ENCODE measurements at regions of chr10 and their contacts with region 1.

Region 1: GRCh38 chr10:46284293-46285229 is 2.2 kb upstream of the ANTXRL start:
- DNase-seq: peak; percentile 86
- ATAC-seq: peak; percentile 83
- H3K4me3 Mint-ChIP-seq: peak overlapping the region; percentile 82
- H3K27ac Mint-ChIP-seq: peak overlapping the region; percentile 90
- H3K4me1 Mint-ChIP-seq: peaks cover 16% of the 10 kb centered on the region
- H3K27me3 Mint-ChIP-seq: peaks cover 11% of the 10 kb centered on the region

Region 2: GRCh38 chr10:46022978-46023702 is 261.4 kb before region 1 on chr10:
- CTCF ChIA-PET with region 1: no interaction called
- POLR2A ChIA-PET with region 1: no interaction called
- intact Hi-C with region 1: loop called in 1 of 2 experiments (anchors 5 kb)
- DNase-seq: peak; percentile 91
- ATAC-seq: peak; percentile 91
- H3K4me3 Mint-ChIP-seq: peak overlapping the region; percentile 79
- H3K27ac Mint-ChIP-seq: peak overlapping the region; percentile 75
- H3K4me1 Mint-ChIP-seq: peaks cover 93% of the 10 kb centered on the region
- H3K27me3 Mint-ChIP-seq: no peaks in the 10 kb centered on the region

Region 3: DNA sequence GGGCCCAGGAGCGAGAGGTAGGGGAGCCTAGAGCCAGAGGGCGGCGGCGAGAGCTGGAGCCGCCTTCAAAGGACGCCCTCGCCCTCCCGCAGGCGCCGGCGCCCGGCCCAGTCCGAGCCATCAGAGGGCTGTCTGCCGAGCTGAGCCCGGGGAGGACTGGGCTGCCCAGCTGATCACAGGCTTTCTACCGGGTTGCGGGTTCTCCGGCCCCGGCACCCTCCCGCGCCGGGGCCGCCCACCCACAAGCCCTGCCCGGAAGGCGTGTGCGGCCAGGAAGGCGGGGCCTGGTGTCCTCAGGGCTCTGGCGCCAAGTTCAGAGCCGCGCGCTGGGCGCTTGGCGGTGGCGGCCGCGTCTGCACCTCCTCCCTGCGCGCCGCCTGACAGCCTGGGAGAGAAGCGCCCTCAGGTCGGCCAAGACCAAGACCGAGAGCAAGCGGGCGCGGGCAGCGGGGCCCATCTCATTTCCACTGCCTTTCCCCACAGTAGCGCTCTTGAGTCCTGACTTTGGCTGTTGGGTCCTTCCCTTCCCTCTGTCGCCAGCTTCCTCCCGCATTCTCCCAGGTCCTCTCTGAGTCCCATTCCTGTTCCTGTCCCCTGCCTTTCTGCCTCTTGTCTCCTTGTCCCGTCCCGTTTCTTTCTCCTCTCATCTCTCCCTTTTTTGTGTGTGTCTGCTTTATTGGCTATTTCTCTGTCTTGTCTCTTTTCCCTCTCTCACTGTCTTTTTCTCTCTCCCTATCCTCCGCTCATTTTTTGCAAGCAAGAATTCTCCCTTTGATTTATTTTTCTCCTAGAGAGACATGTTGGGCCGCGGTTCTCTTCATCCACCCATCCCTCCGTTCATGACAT is 177.9 kb before region 1 on chr10:
- CTCF ChIA-PET with region 1: interaction called, 7 read pairs
- POLR2A ChIA-PET with region 1: interaction called, 3 read pairs
- intact Hi-C with region 1: loop called in 1 of 2 experiments (anchors 1 kb)
- DNase-seq: peak; percentile 79
- ATAC-seq: peak; percentile 97
- H3K4me3 Mint-ChIP-seq: peak overlapping the region; percentile 73
- H3K27ac Mint-ChIP-seq: peak overlapping the region; percentile 75
- H3K4me1 Mint-ChIP-seq: peaks cover 14% of the 10 kb centered on the region
- H3K27me3 Mint-ChIP-seq: peaks cover 6% of the 10 kb centered on the region

Region 4: DNA sequence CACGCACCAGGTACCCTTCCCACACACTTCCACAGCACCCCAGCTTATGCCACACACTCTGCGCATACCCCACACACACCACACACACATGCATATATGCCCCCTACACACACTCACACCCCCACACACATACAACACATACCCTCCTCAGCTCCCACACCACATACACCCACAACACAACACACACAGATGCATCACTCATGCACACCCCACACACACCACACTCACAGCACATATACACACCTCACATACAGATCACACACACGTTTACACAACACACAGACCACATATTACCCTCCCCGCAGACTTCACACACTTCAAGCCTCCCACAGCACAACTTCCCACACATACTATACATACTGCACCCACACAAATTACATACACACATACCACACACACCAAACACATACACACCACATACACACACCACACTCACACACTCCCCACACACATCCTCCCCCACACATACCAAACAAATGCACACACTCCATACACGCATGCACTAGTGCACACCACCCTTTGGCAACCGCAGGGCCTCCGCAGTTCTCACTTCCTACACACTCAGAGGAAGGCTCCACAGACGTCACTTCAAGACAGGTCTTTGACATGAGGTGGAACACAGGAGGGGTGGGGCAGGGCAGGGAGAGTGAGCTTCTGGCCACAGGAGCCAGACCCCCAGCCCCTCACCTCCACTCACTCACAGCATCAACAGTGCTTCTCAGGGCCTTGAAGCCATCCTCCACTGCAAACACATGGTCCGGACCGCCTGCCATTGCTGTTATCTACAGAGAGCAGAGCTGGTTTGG is 16.3 kb before region 1 on chr10:
- CTCF ChIA-PET with region 1: interaction called, 3 read pairs
- POLR2A ChIA-PET with region 1: interaction called, 3 read pairs
- intact Hi-C with region 1: loop called in 1 of 2 experiments (anchors 1 kb)
- DNase-seq: peak; percentile 87
- ATAC-seq: peak; percentile 80
- H3K4me3 Mint-ChIP-seq: no peak overlapping the region
- H3K27ac Mint-ChIP-seq: no peak overlapping the region
- H3K4me1 Mint-ChIP-seq: peaks cover 25% of the 10 kb centered on the region
- H3K27me3 Mint-ChIP-seq: no peaks in the 10 kb centered on the region

Region 5: DNA sequence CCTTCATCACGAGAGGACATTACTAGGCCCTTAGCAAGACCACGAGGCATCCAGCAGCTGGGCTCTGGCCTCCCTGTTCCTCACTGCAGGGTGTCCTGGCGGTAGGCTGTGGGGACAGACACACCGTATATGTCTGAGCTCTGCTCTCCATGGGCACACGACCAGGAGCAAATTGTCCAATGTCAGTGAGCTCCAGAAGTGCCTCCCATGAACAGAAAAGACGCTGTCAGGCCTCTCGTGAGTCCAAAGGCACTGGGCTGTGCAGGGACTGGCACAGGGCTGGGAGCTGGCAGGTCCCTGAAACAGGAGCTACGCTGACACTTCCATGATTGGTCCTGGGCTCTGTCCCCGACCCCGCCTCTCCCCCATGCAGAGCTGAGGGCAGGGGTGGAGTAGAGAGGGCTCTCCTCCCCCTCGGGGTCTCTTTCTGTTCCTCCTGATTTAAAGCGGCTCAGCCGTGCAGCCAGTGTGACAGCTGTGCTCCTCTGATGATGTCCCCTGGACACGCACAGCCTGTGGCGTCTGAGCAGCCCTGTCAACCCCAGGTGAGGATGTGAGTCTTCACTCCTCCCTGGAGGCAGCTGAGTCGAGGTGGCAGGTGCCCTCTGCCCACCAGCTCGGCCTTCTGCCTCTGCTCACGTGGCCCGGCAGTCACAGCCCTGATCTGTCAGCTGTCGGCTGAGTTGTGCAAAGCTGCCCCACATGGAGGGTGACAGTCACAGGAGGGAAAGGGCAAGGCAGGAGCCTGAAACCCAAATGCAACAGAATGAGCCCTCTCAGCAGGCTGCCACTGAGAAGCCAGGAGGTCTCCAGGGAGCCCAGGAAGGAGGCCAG is 15.2 kb after region 1 on chr10:
- CTCF ChIA-PET with region 1: no interaction called
- POLR2A ChIA-PET with region 1: no interaction called
- intact Hi-C with region 1: loop called in 1 of 2 experiments (anchors 1 kb)
- DNase-seq: no peak
- ATAC-seq: no peak
- H3K4me3 Mint-ChIP-seq: no peak overlapping the region
- H3K27ac Mint-ChIP-seq: no peak overlapping the region
- H3K4me1 Mint-ChIP-seq: peaks cover 23% of the 10 kb centered on the region
- H3K27me3 Mint-ChIP-seq: no peaks in the 10 kb centered on the region

Region 6: DNA sequence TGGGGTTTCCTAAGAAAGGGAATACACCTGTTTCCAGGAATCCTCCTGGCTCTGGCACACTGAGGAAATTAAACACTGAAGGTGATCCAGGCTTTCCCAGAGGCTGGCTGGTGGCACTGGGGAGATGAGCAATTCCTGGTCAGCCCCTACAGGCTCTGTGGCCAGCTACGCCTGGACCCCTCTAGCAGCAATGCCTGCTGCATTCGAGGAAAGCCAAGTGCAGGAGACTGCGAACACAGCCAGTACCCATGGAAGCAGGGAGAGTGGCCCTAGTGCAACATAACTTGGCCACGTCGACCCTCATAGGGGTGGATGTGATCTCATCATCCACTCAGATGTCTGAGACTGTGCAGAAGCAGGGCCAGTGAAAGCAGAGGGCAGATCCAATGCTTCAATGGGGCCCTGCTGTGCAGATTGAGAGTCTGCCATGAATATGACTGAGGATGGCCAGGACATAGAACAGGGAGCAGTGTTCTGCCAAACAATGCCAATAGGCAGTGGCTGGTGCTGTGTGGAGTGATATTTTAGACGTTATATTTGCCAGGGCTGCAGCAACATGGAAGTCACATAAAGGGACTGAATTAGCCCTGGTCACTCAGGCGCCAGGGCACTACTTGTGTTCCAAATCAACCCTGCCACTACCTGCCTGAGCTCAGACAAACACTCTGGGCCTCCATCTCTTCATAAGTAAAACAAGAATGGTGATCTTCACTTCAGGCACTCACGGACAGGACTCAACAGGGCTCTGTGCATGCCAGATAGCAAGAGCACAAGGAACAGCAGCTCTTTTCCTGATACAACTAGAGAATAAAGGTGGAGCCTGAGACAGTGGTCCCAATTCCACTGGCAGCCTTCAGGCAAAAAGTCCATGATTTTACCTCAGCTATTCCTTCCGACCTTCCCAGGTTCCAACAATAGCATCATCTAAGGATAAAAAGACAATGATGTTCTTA is 1097.1 kb after region 1 on chr10:
- CTCF ChIA-PET with region 1: interaction called, 4 read pairs
- POLR2A ChIA-PET with region 1: no interaction called
- intact Hi-C with region 1: loop called in 1 of 2 experiments (anchors 2 kb)
- DNase-seq: no peak
- ATAC-seq: no peak
- H3K4me3 Mint-ChIP-seq: no peak overlapping the region
- H3K27ac Mint-ChIP-seq: no peak overlapping the region
- H3K4me1 Mint-ChIP-seq: peaks cover 16% of the 10 kb centered on the region
- H3K27me3 Mint-ChIP-seq: peaks cover 40% of the 10 kb centered on the region

Region 7: DNA sequence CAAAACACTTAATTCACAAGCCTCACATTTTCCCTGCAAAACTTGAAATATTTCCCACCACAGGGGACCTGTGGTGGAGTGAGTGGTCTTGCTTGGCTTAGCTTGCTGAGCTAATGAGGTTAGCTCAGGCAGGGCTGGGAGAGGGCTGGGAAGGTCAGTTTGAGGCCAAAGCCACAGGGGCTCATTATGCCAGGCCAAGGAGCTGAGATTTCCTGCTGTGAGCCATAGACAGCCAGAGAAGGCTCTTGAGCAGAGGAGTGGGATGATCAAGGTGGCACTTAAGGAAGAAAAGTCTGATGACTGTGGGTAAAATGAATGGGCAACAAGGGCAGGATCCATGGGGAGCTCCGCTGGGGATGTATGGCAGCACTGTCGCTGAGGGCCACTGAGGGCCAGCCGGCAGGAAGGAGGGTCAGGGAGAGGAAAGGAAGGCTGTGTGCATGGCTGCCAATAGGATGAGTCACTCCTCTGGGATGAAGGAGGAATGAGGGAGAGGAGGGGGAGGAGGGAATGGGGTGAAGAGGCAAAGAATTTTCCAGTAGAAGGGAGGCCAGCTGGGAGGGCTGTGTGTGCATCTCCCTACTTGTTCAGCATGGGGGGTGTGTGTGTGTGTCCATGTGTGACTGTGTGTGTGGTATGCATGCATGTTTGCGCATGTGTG is 1118.2 kb after region 1 on chr10:
- CTCF ChIA-PET with region 1: no interaction called
- POLR2A ChIA-PET with region 1: no interaction called
- intact Hi-C with region 1: no loop called
- DNase-seq: no peak
- ATAC-seq: no peak
- H3K4me3 Mint-ChIP-seq: no peak overlapping the region
- H3K27ac Mint-ChIP-seq: no peak overlapping the region
- H3K4me1 Mint-ChIP-seq: no peaks in the 10 kb centered on the region
- H3K27me3 Mint-ChIP-seq: no peaks in the 10 kb centered on the region